Endothelial cell of umbilical vein (primary cell): ENCODE measurements at regions of chr6 and their contacts with region 1.

Region 1: DNA sequence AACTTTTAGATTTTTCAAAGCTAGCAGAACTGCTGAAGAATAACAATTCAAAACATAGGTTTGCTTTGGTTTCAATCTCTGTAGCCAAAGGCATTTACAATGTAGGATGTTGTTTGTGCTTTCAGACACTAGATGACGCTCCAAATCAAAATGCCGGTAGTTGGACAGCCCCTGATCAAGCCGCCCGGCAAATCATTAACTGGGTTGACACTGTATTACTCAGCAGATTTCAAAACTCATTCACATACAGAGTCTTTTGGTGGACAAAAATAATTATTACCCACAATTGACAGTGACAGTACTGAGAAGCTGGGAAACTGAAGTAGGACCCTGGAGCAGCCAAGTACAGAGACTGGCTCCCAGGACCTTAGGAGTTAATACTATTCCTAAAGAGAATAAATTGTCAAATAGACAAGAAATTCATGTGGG is 21.3 kb upstream of the HFE start:
- DNase-seq: peak; percentile 79
- H3K4me3 ChIP-seq: no peak overlapping the region
- H3K27ac ChIP-seq: no peak overlapping the region
- H3K4me1 ChIP-seq: no peaks in the 10 kb centered on the region
- H3K27me3 ChIP-seq: peaks cover 14 to 29% of the 10 kb centered on the region in 2 experiments
- CTCF ChIP-seq: peak; percentile 74 to 79
- POLR2A ChIP-seq: no peak

Region 2: GRCh38 chr6:26045065-26045927 is 20.7 kb before region 1 on chr6:
- CTCF ChIA-PET with region 1: interaction called, 12 read pairs
- POLR2A ChIA-PET with region 1: interaction called, 3 read pairs
- dilution Hi-C with region 1: no loop called
- intact Hi-C with region 1: no loop called
- DNase-seq: peak; percentile 97
- H3K4me3 ChIP-seq: peak overlapping the region; percentile 3 to 62 (median 45)
- H3K27ac ChIP-seq: peak overlapping the region; percentile 92
- H3K4me1 ChIP-seq: peaks cover 19% of the 10 kb centered on the region
- H3K27me3 ChIP-seq: no peaks in the 10 kb centered on the region
- CTCF ChIP-seq: peak in 1 of 2 donors; percentile 23
- POLR2A ChIP-seq: peak; percentile 98

Region 3: GRCh38 chr6:26087284-26088115 is 21.5 kb after region 1 on chr6 and contains the start of gene HFE:
- CTCF ChIA-PET with region 1: interaction called, 202 read pairs
- POLR2A ChIA-PET with region 1: no interaction called
- dilution Hi-C with region 1: no loop called
- intact Hi-C with region 1: loop called (anchors 1 kb)
- DNase-seq: peak; percentile 70
- H3K4me3 ChIP-seq: peak within 1 kb of the TSS; percentile 53 to 79 (median 73)
- H3K27ac ChIP-seq: peak within 1 kb of the TSS; percentile 6
- H3K4me1 ChIP-seq: peaks cover 10% of the 10 kb centered on the region
- H3K27me3 ChIP-seq: no peaks in the 10 kb centered on the region
- CTCF ChIP-seq: peak in 1 of 2 donors; percentile 26
- POLR2A ChIP-seq: no peak
- total RNA-seq, gene HFE: 5.6 and 6.3 TPM in 2 replicates

Region 4: GRCh38 chr6:26097268-26097875 is 31.4 kb after region 1 on chr6:
- CTCF ChIA-PET with region 1: interaction called, 202 read pairs
- POLR2A ChIA-PET with region 1: no interaction called
- dilution Hi-C with region 1: no loop called
- intact Hi-C with region 1: loop called (anchors 1 kb)
- DNase-seq: peak; percentile 66
- H3K4me3 ChIP-seq: no peak overlapping the region
- H3K27ac ChIP-seq: no peak overlapping the region
- H3K4me1 ChIP-seq: peaks cover under 1% of the 10 kb centered on the region
- H3K27me3 ChIP-seq: peaks cover 0 to 4% of the 10 kb centered on the region in 2 experiments
- CTCF ChIP-seq: peak; percentile 59
- POLR2A ChIP-seq: no peak

Region 5: DNA sequence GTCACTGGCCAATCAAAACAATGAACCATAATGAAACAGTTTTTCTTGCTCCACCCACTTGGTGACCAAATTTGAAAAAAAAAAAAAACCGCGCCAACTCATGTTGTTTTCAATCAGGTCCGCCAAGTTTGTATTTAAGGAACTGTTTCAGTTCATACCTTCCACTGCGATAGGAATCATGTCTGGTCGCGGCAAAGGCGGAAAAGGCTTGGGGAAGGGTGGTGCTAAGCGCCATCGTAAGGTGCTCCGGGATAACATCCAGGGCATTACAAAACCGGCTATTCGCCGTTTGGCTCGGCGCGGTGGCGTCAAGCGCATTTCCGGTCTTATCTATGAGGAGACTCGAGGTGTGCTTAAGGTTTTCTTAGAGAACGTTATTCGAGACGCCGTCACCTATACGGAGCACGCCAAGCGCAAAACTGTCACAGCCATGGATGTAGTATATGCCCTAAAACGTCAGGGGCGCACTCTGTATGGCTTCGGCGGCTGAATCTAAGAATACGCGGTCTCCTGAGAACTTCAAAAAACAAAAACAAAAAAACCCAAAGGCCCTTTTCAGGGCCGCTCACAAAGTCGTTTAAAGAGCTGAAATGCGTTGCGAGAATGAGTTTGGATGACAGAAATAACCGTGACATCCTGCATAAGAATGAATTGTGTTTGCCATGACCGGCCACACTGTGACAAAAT is 37.9 kb after region 1 on chr6:
- CTCF ChIA-PET with region 1: interaction called, 202 read pairs
- POLR2A ChIA-PET with region 1: interaction called, 4 read pairs
- dilution Hi-C with region 1: no loop called
- intact Hi-C with region 1: no loop called
- DNase-seq: peak; percentile 97
- H3K4me3 ChIP-seq: peak overlapping the region; percentile 32 to 46 (median 34)
- H3K27ac ChIP-seq: peak overlapping the region; percentile 87
- H3K4me1 ChIP-seq: peaks cover 18% of the 10 kb centered on the region
- H3K27me3 ChIP-seq: peaks cover 0 to 4% of the 10 kb centered on the region in 2 experiments
- CTCF ChIP-seq: peak; percentile 31 to 57
- POLR2A ChIP-seq: peak; percentile 99

Region 6: GRCh38 chr6:26175428-26176181 is 109.6 kb after region 1 on chr6:
- CTCF ChIA-PET with region 1: no interaction called
- POLR2A ChIA-PET with region 1: no interaction called
- dilution Hi-C with region 1: no loop called
- intact Hi-C with region 1: loop called (anchors 1 kb)
- DNase-seq: peak; percentile 85
- H3K4me3 ChIP-seq: no peak overlapping the region
- H3K27ac ChIP-seq: no peak overlapping the region
- H3K4me1 ChIP-seq: peaks cover 11% of the 10 kb centered on the region
- H3K27me3 ChIP-seq: no peaks in the 10 kb centered on the region
- CTCF ChIP-seq: peak; percentile 46 to 51
- POLR2A ChIP-seq: no peak

Region 7: GRCh38 chr6:26196846-26197648 is 131.1 kb after region 1 on chr6:
- CTCF ChIA-PET with region 1: no interaction called
- POLR2A ChIA-PET with region 1: no interaction called
- dilution Hi-C with region 1: no loop called
- intact Hi-C with region 1: loop called (anchors 2 kb)
- DNase-seq: peak; percentile 96
- H3K4me3 ChIP-seq: peak overlapping the region; percentile 1 to 98 (median 52)
- H3K27ac ChIP-seq: peak overlapping the region; percentile 94
- H3K4me1 ChIP-seq: peaks cover 19% of the 10 kb centered on the region
- H3K27me3 ChIP-seq: no peaks in the 10 kb centered on the region
- CTCF ChIP-seq: no peak
- POLR2A ChIP-seq: peak; percentile 97